ENCODE measurements at regions of chr12 and their contacts with region 1.

Region 1: GRCh38 chr12:121209624-121210572 is at the start of gene P2RX4:
- DNase-seq: peak; percentile 77 to 90 (median 88)
- ATAC-seq: peak; percentile 87
- H3K4me3 ChIP-seq: peak within 1 kb of the TSS; percentile 85
- H3K4me3 Mint-ChIP-seq: peak within 1 kb of the TSS; percentile 79 to 96 (median 94)
- H3K27ac ChIP-seq: peak within 1 kb of the TSS; percentile 89
- H3K27ac Mint-ChIP-seq: peak within 1 kb of the TSS; percentile 90 to 100 (median 93)
- H3K4me1 ChIP-seq: peaks cover 10 to 20% of the 10 kb centered on the region in 2 donors
- H3K4me1 Mint-ChIP-seq: peaks cover 15 to 45% (median 26%) of the 10 kb centered on the region in 7 donors
- H3K27me3 ChIP-seq: no peaks in the 10 kb centered on the region
- H3K27me3 Mint-ChIP-seq: no peaks in the 10 kb centered on the region
- total RNA-seq, gene P2RX4: 34.1 to 56.9 (median 40.5) TPM

Region 2: DNA sequence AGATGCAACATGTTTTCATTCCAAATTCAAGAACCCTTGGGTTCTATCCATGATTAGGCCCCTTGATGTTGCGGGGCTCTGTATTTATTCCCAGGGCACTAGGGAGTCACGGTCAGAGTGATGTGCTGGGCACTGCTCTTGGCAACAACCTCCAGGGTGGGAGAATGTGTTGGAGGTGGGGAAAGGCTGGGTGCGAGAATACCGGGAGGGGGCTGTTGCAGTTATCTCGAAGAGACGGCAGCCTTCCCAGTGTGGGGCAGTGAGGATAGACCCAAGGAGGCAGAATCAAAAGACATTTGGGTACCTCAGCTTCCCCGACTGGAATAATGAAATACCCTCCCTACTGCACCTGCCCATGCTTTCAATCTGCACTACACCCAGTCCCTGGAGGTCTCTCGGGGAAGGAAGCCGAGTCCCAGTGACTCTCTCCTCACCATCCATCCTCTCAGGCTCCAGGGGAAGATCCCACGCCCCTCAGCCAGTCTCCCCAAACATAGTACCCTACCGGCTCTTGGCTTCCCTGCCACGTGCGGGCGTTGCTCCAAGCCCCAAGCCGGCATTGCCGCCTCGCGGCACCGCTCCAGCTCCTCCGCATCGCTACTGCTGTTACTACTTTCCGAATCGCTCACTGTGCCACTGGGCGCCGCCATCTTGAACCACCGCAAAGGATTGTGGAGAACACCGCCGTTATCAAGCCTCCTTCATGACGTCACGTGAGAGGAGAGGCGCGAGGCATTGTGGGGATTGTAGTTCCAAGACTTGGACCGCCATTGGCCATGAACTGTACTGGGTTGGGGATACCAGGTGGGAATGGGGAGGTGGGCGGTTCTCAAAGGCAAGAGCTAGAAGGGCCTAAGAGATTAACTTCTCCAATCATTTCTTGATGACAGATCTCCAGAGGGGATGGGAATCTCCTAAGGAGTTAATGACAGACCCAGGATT is 193.8 kb before region 1 on chr12 and contains the start of gene C12orf43:
- CTCF ChIA-PET with region 1: no interaction called
- POLR2A ChIA-PET with region 1: no interaction called
- intact Hi-C with region 1: loop called (anchors 5 kb)
- DNase-seq: peak; percentile 74 to 93 (median 89)
- ATAC-seq: peak; percentile 99
- H3K4me3 ChIP-seq: peak within 1 kb of the TSS; percentile 88
- H3K4me3 Mint-ChIP-seq: peak within 1 kb of the TSS; percentile 93 to 99 (median 96)
- H3K27ac ChIP-seq: peak within 1 kb of the TSS; percentile 88
- H3K27ac Mint-ChIP-seq: peak within 1 kb of the TSS; percentile 89 to 97 (median 95)
- H3K4me1 ChIP-seq: peaks cover 6 to 11% of the 10 kb centered on the region in 2 donors
- H3K4me1 Mint-ChIP-seq: peaks cover 17 to 32% (median 24%) of the 10 kb centered on the region in 7 donors
- H3K27me3 ChIP-seq: no peaks in the 10 kb centered on the region
- H3K27me3 Mint-ChIP-seq: no peaks in the 10 kb centered on the region
- total RNA-seq, gene C12orf43: 11.8 to 24.2 (median 17.5) TPM

Region 3: GRCh38 chr12:121159467-121160307 is 50.2 kb before region 1 on chr12:
- CTCF ChIA-PET with region 1: no interaction called
- POLR2A ChIA-PET with region 1: no interaction called
- intact Hi-C with region 1: loop called in 1 of 2 experiments (anchors 2 kb)
- DNase-seq: no peak
- ATAC-seq: no peak
- H3K4me3 ChIP-seq: no peak overlapping the region
- H3K4me3 Mint-ChIP-seq: no peak overlapping the region
- H3K27ac ChIP-seq: no peak overlapping the region
- H3K27ac Mint-ChIP-seq: no peak overlapping the region
- H3K4me1 ChIP-seq: no peaks in the 10 kb centered on the region
- H3K4me1 Mint-ChIP-seq: peaks cover 0 to 9% (median 0%) of the 10 kb centered on the region in 7 donors
- H3K27me3 ChIP-seq: no peaks in the 10 kb centered on the region
- H3K27me3 Mint-ChIP-seq: no peaks in the 10 kb centered on the region

Region 4: GRCh38 chr12:121223292-121224285 is 13.7 kb after region 1 on chr12:
- CTCF ChIA-PET with region 1: interaction called, 6 read pairs
- POLR2A ChIA-PET with region 1: interaction called, 53 read pairs
- intact Hi-C with region 1: loop called (anchors 1 kb)
- DNase-seq: peak in 8 of 9 donors; percentile 21 to 56 (median 48)
- ATAC-seq: peak; percentile 68
- H3K4me3 ChIP-seq: peak overlapping the region; percentile 28
- H3K4me3 Mint-ChIP-seq: peak overlapping the region; percentile 48 to 91 (median 72)
- H3K27ac ChIP-seq: peak overlapping the region; percentile 56
- H3K27ac Mint-ChIP-seq: peak overlapping the region; percentile 92 to 98 (median 95)
- H3K4me1 ChIP-seq: peaks cover 16 to 48% of the 10 kb centered on the region in 2 donors
- H3K4me1 Mint-ChIP-seq: peaks cover 23 to 57% (median 49%) of the 10 kb centered on the region in 7 donors
- H3K27me3 ChIP-seq: no peaks in the 10 kb centered on the region
- H3K27me3 Mint-ChIP-seq: no peaks in the 10 kb centered on the region

Region 5: DNA sequence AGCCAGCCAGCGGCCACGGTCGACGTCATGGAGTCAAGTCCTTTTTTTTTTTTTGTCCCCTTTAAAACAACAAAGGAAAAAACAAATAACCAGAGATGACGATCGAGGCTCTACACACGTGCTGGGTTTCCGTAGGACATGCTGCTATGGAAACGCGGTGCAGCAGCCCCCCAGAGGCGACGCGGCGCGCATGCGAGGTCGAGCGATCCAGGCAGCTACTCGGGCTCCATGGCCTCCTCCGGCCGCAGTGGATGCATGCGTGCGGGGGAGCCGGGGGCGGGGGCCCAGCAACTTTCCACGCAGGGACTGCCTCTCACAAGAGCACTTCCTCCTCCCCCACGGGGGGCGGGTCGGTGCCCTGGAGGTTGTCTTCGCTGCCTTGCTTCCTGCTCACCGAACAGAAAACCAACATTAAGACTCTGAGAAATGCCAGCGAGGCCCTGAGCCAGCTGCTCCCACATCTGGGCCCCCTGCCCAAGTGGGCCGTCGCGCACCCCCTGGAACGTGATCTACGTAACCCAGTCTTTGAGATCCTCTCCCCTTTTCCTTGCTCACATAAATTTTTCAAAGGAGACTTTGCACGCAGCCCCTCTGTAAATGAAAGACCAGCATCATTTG is 30.7 kb after region 1 on chr12:
- CTCF ChIA-PET with region 1: no interaction called
- POLR2A ChIA-PET with region 1: interaction called, 3 read pairs
- intact Hi-C with region 1: loop called in 1 of 2 experiments (anchors 1 kb)
- DNase-seq: peak; percentile 78 to 99 (median 96)
- ATAC-seq: peak; percentile 95
- H3K4me3 ChIP-seq: peak overlapping the region; percentile 71
- H3K4me3 Mint-ChIP-seq: peak overlapping the region; percentile 81 to 94 (median 88)
- H3K27ac ChIP-seq: peak overlapping the region; percentile 87
- H3K27ac Mint-ChIP-seq: peak overlapping the region; percentile 90 to 100 (median 99)
- H3K4me1 ChIP-seq: peaks cover 30 to 44% of the 10 kb centered on the region in 2 donors
- H3K4me1 Mint-ChIP-seq: peaks cover 26 to 57% (median 47%) of the 10 kb centered on the region in 7 donors
- H3K27me3 ChIP-seq: no peaks in the 10 kb centered on the region
- H3K27me3 Mint-ChIP-seq: no peaks in the 10 kb centered on the region

Region 6: DNA sequence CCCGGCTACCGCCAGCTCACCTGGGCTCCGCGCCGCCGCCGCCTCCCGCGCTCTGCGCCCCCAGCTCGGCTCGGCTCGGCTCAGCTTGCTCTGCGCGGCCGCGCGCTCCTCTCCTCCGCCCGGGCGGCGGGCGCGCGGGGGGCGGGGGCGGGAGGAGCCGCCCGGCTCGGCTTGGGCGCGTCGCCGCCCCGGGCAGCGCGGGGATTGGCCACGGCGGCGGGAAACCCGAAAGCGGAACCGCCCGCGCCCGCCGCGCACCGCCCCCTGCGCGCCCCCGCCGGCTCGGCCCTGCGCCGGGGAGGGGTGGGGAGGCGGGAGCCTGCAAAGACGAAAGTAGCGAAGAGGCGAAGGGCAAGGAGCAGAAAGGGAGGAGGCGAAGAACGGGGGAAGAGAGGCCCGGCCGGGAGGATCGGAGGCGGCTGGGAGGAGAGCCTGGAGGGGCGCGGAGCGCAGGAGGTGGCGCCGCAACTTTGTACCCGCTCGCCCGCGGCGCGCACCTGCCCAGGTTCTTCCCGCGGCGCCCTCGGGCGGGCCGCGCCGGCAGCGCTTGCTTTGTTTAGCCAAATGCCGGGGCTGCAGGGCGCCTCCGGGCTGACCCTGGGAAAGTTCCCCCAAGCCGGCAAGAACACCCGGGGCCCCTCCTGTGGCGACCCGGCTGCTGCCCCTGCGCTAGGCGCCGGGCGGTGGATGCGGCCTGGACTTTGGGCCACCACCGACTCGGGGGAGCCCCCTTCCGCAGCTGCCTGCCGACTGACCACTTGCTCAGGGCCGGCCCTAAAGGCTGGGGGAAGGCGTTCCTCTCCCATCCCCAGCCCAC is 86.9 kb after region 1 on chr12 and contains the start of gene CAMKK2:
- CTCF ChIA-PET with region 1: interaction called, 4 read pairs
- POLR2A ChIA-PET with region 1: interaction called, 3 read pairs
- intact Hi-C with region 1: loop called (anchors 1 kb)
- DNase-seq: peak; percentile 84 to 95 (median 92)
- ATAC-seq: peak; percentile 94
- H3K4me3 ChIP-seq: peak within 1 kb of the TSS; percentile 87
- H3K4me3 Mint-ChIP-seq: peak within 1 kb of the TSS; percentile 86 to 93 (median 89)
- H3K27ac ChIP-seq: peak within 1 kb of the TSS; percentile 80
- H3K27ac Mint-ChIP-seq: peak within 1 kb of the TSS; percentile 55 to 91 (median 81)
- H3K4me1 ChIP-seq: peaks cover 12 to 14% of the 10 kb centered on the region in 2 donors
- H3K4me1 Mint-ChIP-seq: peaks cover 0 to 43% (median 19%) of the 10 kb centered on the region in 7 donors
- H3K27me3 ChIP-seq: no peaks in the 10 kb centered on the region
- H3K27me3 Mint-ChIP-seq: peaks cover 0 to 4% (median 0%) of the 10 kb centered on the region in 5 donors
- total RNA-seq, gene CAMKK2: 15.5 to 38.7 (median 18.1) TPM

Region 7: DNA sequence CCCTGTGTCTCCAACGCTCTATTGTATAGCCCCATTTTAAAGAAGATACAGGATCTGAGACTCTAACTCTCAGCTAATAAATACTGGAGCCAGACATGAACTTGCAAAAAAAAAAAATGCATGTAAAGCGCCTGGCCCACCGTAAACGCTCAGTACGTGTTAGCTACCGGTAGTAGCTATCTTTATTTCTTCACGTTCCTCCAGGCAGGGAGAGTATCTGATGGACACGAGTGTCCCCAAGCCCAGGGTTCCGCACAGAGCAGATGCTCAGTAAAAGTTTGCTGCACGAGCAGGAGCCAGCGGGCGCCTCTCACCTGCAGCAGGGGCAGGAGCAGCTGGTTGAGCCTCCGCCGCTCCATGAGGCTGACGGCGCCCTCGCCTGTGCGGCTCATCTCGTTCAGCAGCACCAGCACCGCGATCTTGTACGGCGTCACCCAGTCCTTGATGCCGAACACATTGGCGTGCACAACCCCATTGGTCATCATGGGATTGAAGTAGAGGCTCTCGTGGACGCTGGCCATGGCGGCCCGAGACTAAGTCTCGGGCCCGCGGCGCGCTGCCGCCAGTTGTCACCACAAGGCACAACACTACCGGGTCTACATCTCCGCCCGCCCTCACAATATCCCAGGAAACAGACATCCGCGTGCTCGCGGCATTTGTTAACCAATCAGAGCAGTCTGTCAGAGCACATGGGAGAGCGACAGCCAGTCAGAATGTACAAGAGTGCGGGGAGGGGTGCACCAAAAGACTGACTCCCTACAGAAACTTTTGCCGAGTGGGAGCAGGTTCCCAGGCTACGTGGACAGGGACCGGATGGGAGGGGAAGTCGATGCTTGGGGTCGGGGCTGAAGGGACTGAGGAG is 142.2 kb after region 1 on chr12 and contains the start of gene ANAPC5:
- CTCF ChIA-PET with region 1: no interaction called
- POLR2A ChIA-PET with region 1: no interaction called
- intact Hi-C with region 1: loop called (anchors 1 kb)
- DNase-seq: peak; percentile 61 to 93 (median 89)
- ATAC-seq: peak; percentile 99
- H3K4me3 ChIP-seq: peak within 1 kb of the TSS; percentile 99
- H3K4me3 Mint-ChIP-seq: peak within 1 kb of the TSS; percentile 88 to 100 (median 97)
- H3K27ac ChIP-seq: peak within 1 kb of the TSS; percentile 78
- H3K27ac Mint-ChIP-seq: peak within 1 kb of the TSS; percentile 90 to 100 (median 98)
- H3K4me1 ChIP-seq: peaks cover 6 to 7% of the 10 kb centered on the region in 2 donors
- H3K4me1 Mint-ChIP-seq: peaks cover 25 to 58% (median 42%) of the 10 kb centered on the region in 7 donors
- H3K27me3 ChIP-seq: no peaks in the 10 kb centered on the region
- H3K27me3 Mint-ChIP-seq: peaks cover 0 to 5% (median 0%) of the 10 kb centered on the region in 5 donors
- total RNA-seq, gene ANAPC5: 114 to 148 (median 141) TPM

Region 8: GRCh38 chr12:122283680-122284079 is 1073.8 kb after region 1 on chr12:
- CTCF ChIA-PET with region 1: no interaction called
- POLR2A ChIA-PET with region 1: no interaction called
- intact Hi-C with region 1: no loop called
- DNase-seq: no peak
- ATAC-seq: no peak
- H3K4me3 ChIP-seq: no peak overlapping the region
- H3K4me3 Mint-ChIP-seq: no peak overlapping the region
- H3K27ac ChIP-seq: no peak overlapping the region
- H3K27ac Mint-ChIP-seq: no peak overlapping the region
- H3K4me1 ChIP-seq: no peaks in the 10 kb centered on the region
- H3K4me1 Mint-ChIP-seq: peaks cover 0 to 5% (median 0%) of the 10 kb centered on the region in 7 donors
- H3K27me3 ChIP-seq: no peaks in the 10 kb centered on the region
- H3K27me3 Mint-ChIP-seq: no peaks in the 10 kb centered on the region

Measured in naive thymus-derived CD4-positive, alpha-beta T cell (primary cell).